CD8-positive, alpha-beta memory T cell (primary cell): ENCODE measurements at regions of chr7 and their contacts with region 1.

Region 1: GRCh38 chr7:16420649-16421332 is 547 bp downstream of the CRPPA start:
- DNase-seq: peak; percentile 67 to 93 (median 87)
- H3K4me3 ChIP-seq: peak overlapping the region; percentile 74
- H3K4me3 Mint-ChIP-seq: peak overlapping the region; percentile 87 to 96 (median 92)
- H3K27ac ChIP-seq: peak overlapping the region; percentile 84
- H3K27ac Mint-ChIP-seq: peak overlapping the region; percentile 86 to 98 (median 93)
- H3K4me1 ChIP-seq: peaks cover 15% of the 10 kb centered on the region
- H3K4me1 Mint-ChIP-seq: peaks cover 17 to 33% (median 20%) of the 10 kb centered on the region in 3 donors
- H3K27me3 ChIP-seq: no peaks in the 10 kb centered on the region
- H3K27me3 Mint-ChIP-seq: peaks cover 0 to 5% of the 10 kb centered on the region in 2 donors

Region 2: GRCh38 chr7:16353226-16353625 is 67.6 kb before region 1 on chr7:
- CTCF ChIA-PET with region 1: no interaction called
- POLR2A ChIA-PET with region 1: no interaction called
- DNase-seq: no peak
- H3K4me3 ChIP-seq: no peak overlapping the region
- H3K4me3 Mint-ChIP-seq: no peak overlapping the region
- H3K27ac ChIP-seq: no peak overlapping the region
- H3K27ac Mint-ChIP-seq: no peak overlapping the region
- H3K4me1 ChIP-seq: no peaks in the 10 kb centered on the region
- H3K4me1 Mint-ChIP-seq: peaks cover 0 to 3% (median 3%) of the 10 kb centered on the region in 3 donors
- H3K27me3 ChIP-seq: no peaks in the 10 kb centered on the region
- H3K27me3 Mint-ChIP-seq: no peaks in the 10 kb centered on the region

Region 3: DNA sequence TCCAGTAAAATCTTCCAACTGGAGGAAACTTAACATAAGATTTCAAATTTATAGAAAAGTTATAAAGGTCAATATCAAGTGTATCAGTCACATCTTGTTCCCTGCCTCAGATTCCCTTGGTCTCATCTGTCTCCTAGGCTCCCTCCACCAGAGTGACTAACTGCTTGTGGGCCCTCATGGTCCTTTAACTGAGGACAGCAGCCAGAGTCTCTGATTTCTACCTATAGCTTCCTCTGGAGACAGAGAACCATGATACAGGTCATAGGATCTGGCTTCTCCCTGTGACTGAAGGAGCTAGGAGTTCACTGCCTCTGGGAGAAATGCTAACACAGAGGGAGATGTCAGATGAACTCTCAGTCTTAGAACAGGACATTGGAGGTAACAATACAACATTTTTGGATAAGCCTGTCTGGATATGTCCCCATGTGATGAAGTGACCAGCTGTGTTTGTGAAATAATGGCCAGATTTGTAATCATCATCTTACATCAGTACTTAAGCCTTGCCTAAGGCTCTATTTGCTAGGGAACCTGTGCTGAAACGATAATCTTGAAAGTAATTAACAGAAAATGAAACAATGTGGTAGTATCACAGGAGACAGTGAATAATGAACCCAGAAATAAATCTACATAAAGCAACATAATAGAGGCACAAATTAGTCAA is 55.7 kb before region 1 on chr7:
- CTCF ChIA-PET with region 1: no interaction called
- POLR2A ChIA-PET with region 1: no interaction called
- DNase-seq: no peak
- H3K4me3 ChIP-seq: no peak overlapping the region
- H3K4me3 Mint-ChIP-seq: no peak overlapping the region
- H3K27ac ChIP-seq: no peak overlapping the region
- H3K27ac Mint-ChIP-seq: no peak overlapping the region
- H3K4me1 ChIP-seq: no peaks in the 10 kb centered on the region
- H3K4me1 Mint-ChIP-seq: no peaks in the 10 kb centered on the region
- H3K27me3 ChIP-seq: no peaks in the 10 kb centered on the region
- H3K27me3 Mint-ChIP-seq: no peaks in the 10 kb centered on the region

Region 4: DNA sequence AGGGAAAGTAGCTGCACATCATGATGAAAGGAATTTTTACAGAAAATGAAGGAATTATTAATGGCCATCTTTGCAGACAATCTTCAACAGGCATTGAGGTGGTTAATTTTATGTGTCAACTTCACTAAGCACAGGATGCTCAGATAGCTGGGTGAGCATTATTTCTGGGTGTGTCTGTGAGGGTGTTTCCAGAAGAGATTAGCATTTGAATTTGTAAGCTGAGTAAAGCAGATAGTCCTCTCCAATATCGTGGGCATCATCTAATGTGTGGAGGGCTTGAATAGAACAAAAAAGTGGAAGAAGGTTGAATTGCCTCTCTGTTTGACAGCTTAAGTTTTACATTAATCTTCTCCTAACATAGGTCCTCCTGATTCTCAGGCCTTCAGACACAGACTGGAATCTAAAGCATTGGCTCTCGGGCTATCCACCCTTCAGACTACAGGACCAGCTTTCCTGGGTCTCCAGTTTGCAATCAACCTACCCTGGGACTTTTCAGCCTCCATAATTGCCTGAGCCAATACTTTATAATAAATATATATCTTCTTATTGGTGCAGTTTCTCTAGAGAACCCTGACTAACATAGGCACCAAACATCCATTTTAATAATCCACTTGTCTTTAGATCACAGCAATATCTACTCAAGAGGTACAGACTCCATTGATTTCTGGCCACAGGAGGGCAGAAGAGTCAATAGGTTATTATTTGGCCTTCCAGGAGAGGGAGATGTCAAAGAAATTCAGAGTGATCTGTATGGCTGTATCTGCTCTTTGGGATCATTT is 11.0 kb after region 1 on chr7:
- CTCF ChIA-PET with region 1: interaction called, 62 read pairs
- POLR2A ChIA-PET with region 1: interaction called, 7 read pairs
- DNase-seq: peak in 3 of 5 donors; percentile 7 to 49 (median 30)
- H3K4me3 ChIP-seq: no peak overlapping the region
- H3K4me3 Mint-ChIP-seq: no peak overlapping the region
- H3K27ac ChIP-seq: no peak overlapping the region
- H3K27ac Mint-ChIP-seq: no peak overlapping the region
- H3K4me1 ChIP-seq: no peaks in the 10 kb centered on the region
- H3K4me1 Mint-ChIP-seq: peaks cover 0 to 8% (median 7%) of the 10 kb centered on the region in 3 donors
- H3K27me3 ChIP-seq: no peaks in the 10 kb centered on the region
- H3K27me3 Mint-ChIP-seq: peaks cover 0 to 5% of the 10 kb centered on the region in 2 donors

Region 5: GRCh38 chr7:16484453-16485158 is 63.8 kb after region 1 on chr7:
- CTCF ChIA-PET with region 1: no interaction called
- POLR2A ChIA-PET with region 1: no interaction called
- DNase-seq: no peak
- H3K4me3 ChIP-seq: no peak overlapping the region
- H3K4me3 Mint-ChIP-seq: no peak overlapping the region
- H3K27ac ChIP-seq: no peak overlapping the region
- H3K27ac Mint-ChIP-seq: no peak overlapping the region
- H3K4me1 ChIP-seq: no peaks in the 10 kb centered on the region
- H3K4me1 Mint-ChIP-seq: no peaks in the 10 kb centered on the region
- H3K27me3 ChIP-seq: no peaks in the 10 kb centered on the region
- H3K27me3 Mint-ChIP-seq: peaks cover 2 to 3% of the 10 kb centered on the region in 2 donors

Region 6: DNA sequence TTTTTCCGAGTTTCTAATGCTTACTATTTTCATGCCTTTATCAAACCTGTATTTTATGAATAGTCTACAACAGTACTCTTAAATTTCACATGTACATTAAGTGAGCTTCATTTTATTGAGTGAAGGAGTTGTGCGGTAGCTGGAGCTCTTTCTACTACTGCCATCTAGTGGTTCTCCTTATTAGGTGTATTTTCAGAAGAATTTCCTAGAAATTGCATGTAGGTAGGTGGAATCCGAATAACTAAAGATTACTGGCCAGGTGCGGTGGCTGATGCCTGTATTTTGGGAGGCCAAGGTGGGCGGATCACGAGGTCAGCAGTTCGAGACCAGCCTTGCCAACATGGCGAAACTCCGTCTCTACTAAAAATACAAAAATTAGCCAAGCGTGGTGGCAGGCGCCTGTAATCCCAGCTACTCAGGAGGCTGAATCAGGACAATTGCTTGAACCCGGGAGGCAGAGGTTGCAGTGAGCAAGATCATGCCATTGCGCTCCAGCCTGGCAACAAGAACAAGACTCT is 144.2 kb after region 1 on chr7:
- CTCF ChIA-PET with region 1: interaction called, 17 read pairs
- POLR2A ChIA-PET with region 1: no interaction called
- DNase-seq: peak in 2 of 5 donors; percentile 34 to 46
- H3K4me3 ChIP-seq: no peak overlapping the region
- H3K4me3 Mint-ChIP-seq: peak overlapping the region in 3 of 7 donors; percentile 17 to 39 (median 18)
- H3K27ac ChIP-seq: no peak overlapping the region
- H3K27ac Mint-ChIP-seq: no peak overlapping the region
- H3K4me1 ChIP-seq: peaks cover 17% of the 10 kb centered on the region
- H3K4me1 Mint-ChIP-seq: peaks cover 15 to 25% (median 20%) of the 10 kb centered on the region in 3 donors
- H3K27me3 ChIP-seq: no peaks in the 10 kb centered on the region
- H3K27me3 Mint-ChIP-seq: peaks cover 5 to 24% of the 10 kb centered on the region in 2 donors

Region 7: DNA sequence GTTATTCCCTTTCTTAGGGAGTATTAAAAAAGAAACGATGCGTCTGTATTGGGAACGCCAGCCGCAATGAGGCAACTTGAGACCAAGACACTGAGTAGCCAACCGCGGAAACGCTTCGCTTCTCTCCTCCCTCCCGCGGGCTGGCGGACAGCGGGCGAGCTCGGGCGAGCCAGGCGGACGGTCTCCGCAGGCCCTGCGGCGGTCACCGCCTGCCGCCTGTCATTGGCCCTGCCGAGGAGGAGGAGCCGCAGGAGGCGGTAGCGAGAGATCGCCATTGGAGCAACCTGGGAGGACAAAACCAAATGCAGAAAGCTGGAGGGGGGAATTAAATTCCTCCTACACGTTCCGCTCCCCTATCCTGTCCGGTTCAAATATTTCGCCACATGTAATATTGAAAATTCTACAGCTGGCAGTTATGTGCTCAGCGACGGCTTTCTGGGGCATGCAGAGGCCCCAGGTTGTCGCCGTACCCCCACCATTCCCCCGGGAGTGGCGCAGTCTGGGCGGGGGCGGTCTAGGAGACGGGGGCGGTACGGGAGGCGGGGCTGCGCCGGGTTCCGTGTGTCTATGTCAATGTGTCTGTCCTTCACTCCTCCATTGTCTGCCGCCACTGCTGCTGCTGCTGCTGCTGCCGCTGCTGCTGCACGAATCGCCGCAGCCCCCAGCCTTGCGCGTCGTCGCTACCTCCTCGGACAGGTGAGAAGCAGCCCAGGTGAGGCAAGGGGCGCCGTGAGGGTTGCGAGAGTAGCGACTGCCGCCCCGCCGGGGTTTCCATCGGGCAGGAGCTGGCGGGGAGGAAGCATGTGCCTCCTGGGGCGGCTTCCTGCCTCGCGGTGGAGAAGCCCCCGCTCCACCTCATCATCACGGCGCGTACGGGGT is 225.0 kb after region 1 on chr7 and contains the starts of genes ANKMY2 and BZW2:
- CTCF ChIA-PET with region 1: interaction called, 10 read pairs
- POLR2A ChIA-PET with region 1: interaction called, 7 read pairs
- DNase-seq: peak; percentile 87 to 95 (median 94)
- H3K4me3 ChIP-seq: peak within 1 kb of the TSS; percentile 87
- H3K4me3 Mint-ChIP-seq: peak within 1 kb of the TSS; percentile 95 to 100 (median 98)
- H3K27ac ChIP-seq: peak within 1 kb of the TSS; percentile 88
- H3K27ac Mint-ChIP-seq: peak within 1 kb of the TSS; percentile 89 to 99 (median 97)
- H3K4me1 ChIP-seq: peaks cover 36% of the 10 kb centered on the region
- H3K4me1 Mint-ChIP-seq: peaks cover 57 to 72% (median 71%) of the 10 kb centered on the region in 3 donors
- H3K27me3 ChIP-seq: no peaks in the 10 kb centered on the region
- H3K27me3 Mint-ChIP-seq: peaks cover 0 to 2% of the 10 kb centered on the region in 2 donors
- total RNA-seq, gene ANKMY2: 10.7 to 10.9 TPM
- total RNA-seq, gene BZW2: 128 to 136 TPM